Activated T-helper 2 cell treated with anti-CD3 and anti-CD28 coated beads, Interferon-gamma antibody, Interleukin-2, Interleukin-4, amounts not matched to agents 10 μg/mL and 5 μg/mL and 100 μg/mL, durations not matched to agents 14 hours and 24 hours and 36 hours (primary cell): ENCODE measurements at regions of chr9 and their contacts with region 1.

Region 1: GRCh38 chr9:74570879-74571512 is 73.9 kb downstream of the RORB start:
- DNase-seq: no peak
- H3K4me3 Mint-ChIP-seq: no peak overlapping the region
- H3K27ac Mint-ChIP-seq: no peak overlapping the region
- H3K4me1 Mint-ChIP-seq: no peaks in the 10 kb centered on the region
- H3K27me3 Mint-ChIP-seq: peaks cover 7% of the 10 kb centered on the region

Region 2: GRCh38 chr9:73200694-73201452 is 1370.1 kb before region 1 on chr9:
- intact Hi-C with region 1: loop called (anchors 5 kb)
- DNase-seq: no peak
- H3K4me3 Mint-ChIP-seq: no peak overlapping the region
- H3K27ac Mint-ChIP-seq: no peak overlapping the region
- H3K4me1 Mint-ChIP-seq: peaks cover 1% of the 10 kb centered on the region
- H3K27me3 Mint-ChIP-seq: peaks cover 22% of the 10 kb centered on the region

Region 3: GRCh38 chr9:73683862-73684591 is 887.0 kb before region 1 on chr9:
- intact Hi-C with region 1: loop called (anchors 5 kb)
- DNase-seq: no peak
- H3K4me3 Mint-ChIP-seq: no peak overlapping the region
- H3K27ac Mint-ChIP-seq: no peak overlapping the region
- H3K4me1 Mint-ChIP-seq: no peaks in the 10 kb centered on the region
- H3K27me3 Mint-ChIP-seq: no peaks in the 10 kb centered on the region

Region 4: DNA sequence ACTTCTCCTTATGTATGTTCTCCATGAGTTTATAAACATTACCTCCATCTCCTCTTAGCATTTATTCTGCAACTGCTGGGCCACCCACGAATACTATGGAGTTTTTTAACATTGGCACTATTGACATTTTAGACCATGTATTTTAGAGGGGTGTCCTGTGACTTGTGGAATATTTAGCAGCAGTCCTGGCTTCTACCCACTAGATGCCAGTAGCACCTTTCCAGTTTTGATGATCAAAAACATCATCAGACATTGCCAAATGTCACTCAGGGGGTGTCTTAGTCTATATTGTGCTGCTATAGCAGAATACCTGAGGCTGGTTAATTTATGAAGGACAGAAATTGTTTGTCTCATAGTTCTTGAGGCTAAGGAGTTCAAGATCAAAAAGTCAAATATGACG is 261.3 kb before region 1 on chr9:
- intact Hi-C with region 1: loop called (anchors 10 kb)
- DNase-seq: no peak
- H3K4me3 Mint-ChIP-seq: no peak overlapping the region
- H3K27ac Mint-ChIP-seq: no peak overlapping the region
- H3K4me1 Mint-ChIP-seq: no peaks in the 10 kb centered on the region
- H3K27me3 Mint-ChIP-seq: no peaks in the 10 kb centered on the region

Region 5: DNA sequence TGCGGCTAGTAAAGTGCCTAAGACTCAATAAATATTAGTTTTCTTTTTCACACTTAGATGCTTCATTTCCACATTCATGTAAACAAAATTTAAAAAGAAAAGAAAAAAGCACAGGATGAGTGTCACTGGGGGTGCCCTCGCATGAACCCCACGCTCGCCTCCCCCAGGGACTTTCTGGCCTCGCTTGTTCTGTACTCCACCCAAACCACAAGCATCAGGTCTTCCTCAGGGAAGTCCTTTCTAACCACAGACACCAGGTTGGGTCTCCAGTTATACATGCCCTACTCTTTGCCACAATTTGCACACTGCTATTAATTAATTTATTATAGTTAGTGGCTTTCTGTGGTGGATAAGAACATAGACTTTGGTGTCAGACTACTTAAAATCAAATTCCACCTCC is 18.6 kb after region 1 on chr9:
- intact Hi-C with region 1: no loop called
- DNase-seq: no peak
- H3K4me3 Mint-ChIP-seq: no peak overlapping the region
- H3K27ac Mint-ChIP-seq: no peak overlapping the region
- H3K4me1 Mint-ChIP-seq: peaks cover 2% of the 10 kb centered on the region
- H3K27me3 Mint-ChIP-seq: no peaks in the 10 kb centered on the region

Region 6: GRCh38 chr9:74696520-74696919 is 125.5 kb after region 1 on chr9:
- intact Hi-C with region 1: no loop called
- DNase-seq: no peak
- H3K4me3 Mint-ChIP-seq: no peak overlapping the region
- H3K27ac Mint-ChIP-seq: no peak overlapping the region
- H3K4me1 Mint-ChIP-seq: no peaks in the 10 kb centered on the region
- H3K27me3 Mint-ChIP-seq: no peaks in the 10 kb centered on the region